Activated T-helper 1 cell treated with anti-CD3 and anti-CD28 coated beads, Interleukin-12 subunit alpha, Interleukin-12 subunit beta, Interleukin-2, Interleukin-4 antibody, amounts not matched to agents 30 ng/mL and 10 ng/mL and 1 ng/mL, durations not matched to agents 14 hours and 24 hours and 36 hours (primary cell): ENCODE measurements at regions of chr2 and their contacts with region 1.

Region 1: GRCh38 chr2:178530625-178531142 is 50.4 kb downstream of the PLEKHA3 start:
- DNase-seq: peak; percentile 44
- H3K4me3 Mint-ChIP-seq: peak overlapping the region; percentile 1
- H3K27ac Mint-ChIP-seq: peak overlapping the region; percentile 60
- H3K4me1 Mint-ChIP-seq: peaks cover 43% of the 10 kb centered on the region
- H3K27me3 Mint-ChIP-seq: no peaks in the 10 kb centered on the region

Region 2: DNA sequence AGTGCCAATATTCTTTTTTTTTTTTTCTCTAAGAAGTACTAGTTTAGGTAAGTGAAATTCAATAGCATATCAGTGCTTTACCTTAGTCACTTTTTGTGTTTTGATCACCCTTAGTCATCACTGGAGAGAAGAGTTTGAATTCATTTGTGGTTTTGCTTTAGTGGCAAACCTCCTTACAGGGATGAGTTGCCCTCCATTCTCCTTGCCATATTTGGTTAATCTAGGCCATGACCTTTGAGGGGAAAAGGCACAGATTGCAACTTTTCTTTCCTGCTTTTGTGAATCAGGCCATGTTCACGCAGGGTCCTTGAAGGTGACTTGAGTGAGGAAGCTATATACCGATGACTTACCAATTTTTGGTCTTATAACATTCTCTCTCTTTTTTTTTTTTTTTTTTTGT is 16.0 kb before region 1 on chr2:
- intact Hi-C with region 1: loop called (anchors 1 kb)
- DNase-seq: peak; percentile 17
- H3K4me3 Mint-ChIP-seq: peak overlapping the region; percentile 30
- H3K27ac Mint-ChIP-seq: peak overlapping the region; percentile 82
- H3K4me1 Mint-ChIP-seq: peaks cover 27% of the 10 kb centered on the region
- H3K27me3 Mint-ChIP-seq: no peaks in the 10 kb centered on the region

Region 3: DNA sequence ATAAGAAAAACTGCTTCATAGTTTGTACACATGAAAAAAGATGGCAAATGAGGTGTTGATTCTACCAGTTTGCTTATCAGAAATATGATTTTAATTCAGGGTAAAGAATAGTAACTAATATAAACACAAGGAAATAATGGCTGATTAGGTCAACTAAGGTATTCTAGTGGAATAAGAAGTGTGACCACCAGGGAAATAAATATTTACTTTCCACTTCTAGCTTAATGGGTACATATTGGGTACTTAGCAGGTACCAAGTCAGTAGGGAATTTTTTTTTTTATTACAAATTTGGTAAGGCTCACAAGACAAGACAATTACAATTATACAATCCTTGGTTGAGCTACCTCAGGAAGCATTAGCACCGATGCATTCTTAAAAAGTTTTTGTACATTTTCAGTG is 85.3 kb after region 1 on chr2:
- intact Hi-C with region 1: loop called (anchors 5 kb)
- DNase-seq: no peak
- H3K4me3 Mint-ChIP-seq: no peak overlapping the region
- H3K27ac Mint-ChIP-seq: no peak overlapping the region
- H3K4me1 Mint-ChIP-seq: no peaks in the 10 kb centered on the region
- H3K27me3 Mint-ChIP-seq: no peaks in the 10 kb centered on the region